Activated CD8-positive, alpha-beta memory T cell treated with anti-CD3 and anti-CD28 coated beads, Interleukin-2, amount 10 ng/mL, durations not matched to agents 7 days and 5 days (primary cell): ENCODE measurements at regions of chr22 and their contacts with region 1.

Region 1: DNA sequence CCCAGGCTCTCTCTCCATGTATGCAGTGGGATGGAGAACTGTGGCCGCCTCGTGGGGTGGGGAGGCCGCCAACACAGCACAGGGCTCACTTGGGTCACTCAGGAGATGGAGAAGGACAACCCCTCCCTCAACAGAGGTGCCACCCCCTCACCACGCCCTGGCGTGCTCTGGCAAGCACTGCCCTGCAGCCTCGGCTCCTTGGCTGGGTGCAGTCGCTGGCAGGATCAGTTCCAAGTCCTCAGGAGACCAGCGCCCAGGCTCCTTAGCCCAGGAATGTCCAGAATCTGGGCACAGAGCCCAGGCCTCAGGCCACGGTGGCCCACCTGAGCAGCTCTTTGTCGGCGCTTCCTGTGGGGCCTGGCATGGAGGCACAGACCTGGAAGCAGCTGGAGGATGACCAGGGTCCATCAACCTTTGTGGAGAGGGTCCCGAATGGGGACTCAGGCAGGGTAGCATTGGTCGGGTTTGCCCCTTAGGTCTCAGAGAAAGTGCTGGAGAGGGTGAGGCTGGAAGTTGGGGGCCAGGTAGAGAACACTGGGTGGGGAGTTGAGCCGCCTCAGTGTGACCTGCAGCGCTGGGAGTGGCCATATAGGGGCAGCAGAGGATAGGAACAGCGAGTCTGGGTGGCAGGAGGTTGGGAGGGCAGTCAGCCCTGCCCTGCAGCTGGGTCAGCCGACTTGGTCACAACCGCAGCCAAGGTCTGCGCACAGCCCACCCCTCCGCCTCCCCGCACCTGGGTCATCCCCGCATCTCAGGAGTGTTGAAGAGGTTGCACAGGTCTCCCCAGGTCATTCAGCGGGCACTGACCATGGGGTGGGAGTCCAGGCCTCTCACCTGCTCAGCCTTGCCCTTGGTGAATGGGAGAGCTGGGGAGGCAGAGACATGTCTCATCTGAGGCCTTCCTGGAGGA is 8.2 kb downstream of the SUSD2 start:
- DNase-seq: peak; percentile 73
- ATAC-seq: peak; percentile 79
- H3K4me3 Mint-ChIP-seq: no peak overlapping the region
- H3K27ac Mint-ChIP-seq: no peak overlapping the region
- H3K4me1 Mint-ChIP-seq: no peaks in the 10 kb centered on the region
- H3K27me3 Mint-ChIP-seq: no peaks in the 10 kb centered on the region

Region 2: GRCh38 chr22:24200616-24201212 is 11.2 kb after region 1 on chr22:
- CTCF ChIA-PET with region 1: interaction called, 24 read pairs
- DNase-seq: no peak
- ATAC-seq: no peak
- H3K4me3 Mint-ChIP-seq: no peak overlapping the region
- H3K27ac Mint-ChIP-seq: no peak overlapping the region
- H3K4me1 Mint-ChIP-seq: peaks cover 58% of the 10 kb centered on the region
- H3K27me3 Mint-ChIP-seq: peaks cover 11% of the 10 kb centered on the region